Activated CD8-positive, alpha-beta memory T cell treated with anti-CD3 and anti-CD28 coated beads, Interleukin-2, amount 10 ng/mL, durations not matched to agents 7 days and 5 days (primary cell): ENCODE measurements at regions of chr1 and their contacts with region 1.

Region 1: GRCh38 chr1:198620951-198621824 is 17.7 kb upstream of the PTPRC start:
- DNase-seq: peak; percentile 91
- ATAC-seq: peak; percentile 77
- H3K4me3 Mint-ChIP-seq: peak overlapping the region; percentile 74
- H3K27ac Mint-ChIP-seq: peak overlapping the region; percentile 98
- H3K4me1 Mint-ChIP-seq: peaks cover 89% of the 10 kb centered on the region
- H3K27me3 Mint-ChIP-seq: no peaks in the 10 kb centered on the region

Region 2: GRCh38 chr1:198492500-198493233 is 128.5 kb before region 1 on chr1:
- CTCF ChIA-PET with region 1: no interaction called
- DNase-seq: no peak
- ATAC-seq: no peak
- H3K4me3 Mint-ChIP-seq: no peak overlapping the region
- H3K27ac Mint-ChIP-seq: no peak overlapping the region
- H3K4me1 Mint-ChIP-seq: peaks cover 6% of the 10 kb centered on the region
- H3K27me3 Mint-ChIP-seq: no peaks in the 10 kb centered on the region

Region 3: GRCh38 chr1:198610362-198610761 is 10.8 kb before region 1 on chr1:
- CTCF ChIA-PET with region 1: interaction called, 19 read pairs
- DNase-seq: no peak
- ATAC-seq: no peak
- H3K4me3 Mint-ChIP-seq: peak overlapping the region; percentile 54
- H3K27ac Mint-ChIP-seq: peak overlapping the region; percentile 90
- H3K4me1 Mint-ChIP-seq: peaks cover 62% of the 10 kb centered on the region
- H3K27me3 Mint-ChIP-seq: no peaks in the 10 kb centered on the region

Region 4: GRCh38 chr1:198638894-198639635 is 17.9 kb after region 1 on chr1 and contains the start of gene PTPRC:
- CTCF ChIA-PET with region 1: interaction called, 100 read pairs
- DNase-seq: no peak
- ATAC-seq: peak; percentile 66
- H3K4me3 Mint-ChIP-seq: peak within 1 kb of the TSS; percentile 91
- H3K27ac Mint-ChIP-seq: peak within 1 kb of the TSS; percentile 94
- H3K4me1 Mint-ChIP-seq: peaks cover 51% of the 10 kb centered on the region
- H3K27me3 Mint-ChIP-seq: no peaks in the 10 kb centered on the region
- total RNA-seq, gene PTPRC: 556 to 674 TPM